T-cell (primary cell): ENCODE measurements at regions of chrX and their contacts with region 1.

Region 1: DNA sequence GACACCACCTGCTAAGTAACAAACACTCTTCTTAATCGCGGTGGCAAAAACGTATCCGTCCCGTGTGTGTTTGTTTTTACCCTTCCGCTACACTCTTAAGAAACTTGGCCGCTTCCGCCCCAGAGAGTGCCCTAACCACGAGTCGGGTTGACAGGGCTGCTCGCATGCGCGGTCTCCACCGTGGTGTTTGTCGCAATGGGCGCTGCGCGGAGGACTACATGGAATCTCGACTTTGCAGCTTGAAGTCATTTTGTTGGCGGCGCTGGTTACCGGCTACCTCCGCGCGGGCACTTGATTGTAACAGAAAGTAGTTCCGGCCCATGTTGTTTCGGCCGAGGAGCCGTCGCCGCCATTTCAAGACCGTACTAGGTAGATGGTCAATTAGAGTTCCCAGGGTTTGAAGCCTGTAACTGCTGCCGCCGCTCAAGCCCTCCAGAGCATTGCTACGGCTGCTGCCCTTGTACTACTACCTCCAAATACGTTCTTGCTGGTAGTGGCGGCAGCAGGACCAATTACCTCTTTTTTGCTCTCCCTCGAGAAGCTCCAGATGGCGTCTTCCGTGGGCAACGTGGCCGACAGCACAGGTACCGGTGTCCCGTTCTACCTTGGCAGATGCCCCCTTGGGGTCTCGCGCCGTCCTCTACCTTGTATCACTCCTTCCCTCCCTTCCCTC is at the start of gene OGT:
- DNase-seq: peak; percentile 80 to 96 (median 93)
- ATAC-seq: peak; percentile 79 to 83 (median 80)
- H3K4me3 ChIP-seq: peak within 1 kb of the TSS; percentile 91 to 92
- H3K4me3 Mint-ChIP-seq: peak within 1 kb of the TSS; percentile 97 to 99 (median 98)
- H3K27ac ChIP-seq: peak within 1 kb of the TSS; percentile 93
- H3K27ac Mint-ChIP-seq: peak within 1 kb of the TSS; percentile 93 to 99
- H3K4me1 ChIP-seq: peaks cover 9 to 21% of the 10 kb centered on the region in 2 experiments
- H3K4me1 Mint-ChIP-seq: peaks cover 27 to 32% (median 31%) of the 10 kb centered on the region in 3 donors
- H3K27me3 ChIP-seq: no peaks in the 10 kb centered on the region
- H3K27me3 Mint-ChIP-seq: peaks cover 0 to 3% of the 10 kb centered on the region in 2 donors
- total RNA-seq, gene OGT: 438 to 548 (median 460) TPM

Region 2: GRCh38 chrX:71365876-71366673 is 166.8 kb before region 1 on chrX and contains the start of gene TAF1:
- CTCF ChIA-PET with region 1: no interaction called
- POLR2A ChIA-PET with region 1: interaction called in 1 of 2 experiments, 12 read pairs
- DNase-seq: peak; percentile 65 to 96 (median 93)
- ATAC-seq: peak; percentile 89 to 90 (median 89)
- H3K4me3 ChIP-seq: peak within 1 kb of the TSS; percentile 69 to 89
- H3K4me3 Mint-ChIP-seq: peak within 1 kb of the TSS; percentile 83 to 99 (median 95)
- H3K27ac ChIP-seq: peak within 1 kb of the TSS; percentile 86
- H3K27ac Mint-ChIP-seq: peak within 1 kb of the TSS; percentile 97 to 100
- H3K4me1 ChIP-seq: peaks cover 6 to 30% of the 10 kb centered on the region in 2 experiments
- H3K4me1 Mint-ChIP-seq: peaks cover 21 to 33% (median 29%) of the 10 kb centered on the region in 3 donors
- H3K27me3 ChIP-seq: no peaks in the 10 kb centered on the region
- H3K27me3 Mint-ChIP-seq: no peaks in the 10 kb centered on the region
- total RNA-seq, gene TAF1: 61.4 to 70.0 (median 63.3) TPM

Region 3: GRCh38 chrX:71372388-71372787 is 160.5 kb before region 1 on chrX:
- CTCF ChIA-PET with region 1: no interaction called
- POLR2A ChIA-PET with region 1: interaction called in 1 of 2 experiments, 12 read pairs
- DNase-seq: no peak
- ATAC-seq: no peak
- H3K4me3 ChIP-seq: no peak overlapping the region
- H3K4me3 Mint-ChIP-seq: no peak overlapping the region
- H3K27ac ChIP-seq: no peak overlapping the region
- H3K27ac Mint-ChIP-seq: no peak overlapping the region
- H3K4me1 ChIP-seq: peaks cover 5 to 25% of the 10 kb centered on the region in 2 experiments
- H3K4me1 Mint-ChIP-seq: peaks cover 26 to 39% (median 37%) of the 10 kb centered on the region in 3 donors
- H3K27me3 ChIP-seq: no peaks in the 10 kb centered on the region
- H3K27me3 Mint-ChIP-seq: peaks cover 0 to 5% of the 10 kb centered on the region in 2 donors

Region 4: GRCh38 chrX:71393919-71394318 is 139.0 kb before region 1 on chrX:
- CTCF ChIA-PET with region 1: no interaction called
- POLR2A ChIA-PET with region 1: interaction called, 4 to 10 read pairs
- DNase-seq: no peak
- ATAC-seq: no peak
- H3K4me3 ChIP-seq: no peak overlapping the region
- H3K4me3 Mint-ChIP-seq: no peak overlapping the region
- H3K27ac ChIP-seq: no peak overlapping the region
- H3K27ac Mint-ChIP-seq: no peak overlapping the region
- H3K4me1 ChIP-seq: no peaks in the 10 kb centered on the region
- H3K4me1 Mint-ChIP-seq: peaks cover 0 to 3% (median 2%) of the 10 kb centered on the region in 3 donors
- H3K27me3 ChIP-seq: no peaks in the 10 kb centered on the region
- H3K27me3 Mint-ChIP-seq: peaks cover 0 to 4% of the 10 kb centered on the region in 2 donors

Region 5: GRCh38 chrX:71545364-71545763 is 12.5 kb after region 1 on chrX:
- CTCF ChIA-PET with region 1: interaction called in 1 of 2 experiments, 11 read pairs
- POLR2A ChIA-PET with region 1: interaction called, 8 to 18 read pairs
- DNase-seq: peak in 14 of 35 experiments; percentile 4 to 38 (median 16)
- ATAC-seq: no peak
- H3K4me3 ChIP-seq: no peak overlapping the region
- H3K4me3 Mint-ChIP-seq: no peak overlapping the region
- H3K27ac ChIP-seq: no peak overlapping the region
- H3K27ac Mint-ChIP-seq: no peak overlapping the region
- H3K4me1 ChIP-seq: peaks cover 13 to 22% of the 10 kb centered on the region in 2 experiments
- H3K4me1 Mint-ChIP-seq: peaks cover 36 to 62% (median 52%) of the 10 kb centered on the region in 3 donors
- H3K27me3 ChIP-seq: no peaks in the 10 kb centered on the region
- H3K27me3 Mint-ChIP-seq: peaks cover 0 to 4% of the 10 kb centered on the region in 2 donors

Region 6: GRCh38 chrX:71550578-71550977 is 17.7 kb after region 1 on chrX:
- CTCF ChIA-PET with region 1: interaction called, 4 to 11 read pairs
- POLR2A ChIA-PET with region 1: interaction called, 3 to 18 read pairs
- DNase-seq: no peak
- ATAC-seq: no peak
- H3K4me3 ChIP-seq: no peak overlapping the region
- H3K4me3 Mint-ChIP-seq: no peak overlapping the region
- H3K27ac ChIP-seq: no peak overlapping the region
- H3K27ac Mint-ChIP-seq: peak overlapping the region in 1 of 2 donors; percentile 22
- H3K4me1 ChIP-seq: no peaks in the 10 kb centered on the region
- H3K4me1 Mint-ChIP-seq: peaks cover 11 to 35% (median 20%) of the 10 kb centered on the region in 3 donors
- H3K27me3 ChIP-seq: no peaks in the 10 kb centered on the region
- H3K27me3 Mint-ChIP-seq: no peaks in the 10 kb centered on the region

Region 7: GRCh38 chrX:71558920-71559319 is 26.0 kb after region 1 on chrX:
- CTCF ChIA-PET with region 1: interaction called, 3 read pairs
- POLR2A ChIA-PET with region 1: interaction called, 8 to 12 read pairs
- DNase-seq: no peak
- ATAC-seq: no peak
- H3K4me3 ChIP-seq: no peak overlapping the region
- H3K4me3 Mint-ChIP-seq: no peak overlapping the region
- H3K27ac ChIP-seq: no peak overlapping the region
- H3K27ac Mint-ChIP-seq: no peak overlapping the region
- H3K4me1 ChIP-seq: no peaks in the 10 kb centered on the region
- H3K4me1 Mint-ChIP-seq: peaks cover 3 to 16% (median 15%) of the 10 kb centered on the region in 3 donors
- H3K27me3 ChIP-seq: no peaks in the 10 kb centered on the region
- H3K27me3 Mint-ChIP-seq: peaks cover 0 to 11% of the 10 kb centered on the region in 2 donors

Region 8: GRCh38 chrX:71919407-71919806 is 386.5 kb after region 1 on chrX:
- CTCF ChIA-PET with region 1: no interaction called
- POLR2A ChIA-PET with region 1: no interaction called
- DNase-seq: no peak
- ATAC-seq: no peak
- H3K4me3 ChIP-seq: no peak overlapping the region
- H3K4me3 Mint-ChIP-seq: no peak overlapping the region
- H3K27ac ChIP-seq: no peak overlapping the region
- H3K27ac Mint-ChIP-seq: no peak overlapping the region
- H3K4me1 ChIP-seq: no peaks in the 10 kb centered on the region
- H3K4me1 Mint-ChIP-seq: no peaks in the 10 kb centered on the region
- H3K27me3 ChIP-seq: peaks cover 0 to 2% of the 10 kb centered on the region in 2 experiments
- H3K27me3 Mint-ChIP-seq: peaks cover 10 to 38% of the 10 kb centered on the region in 2 donors